ENCODE measurements at regions of chr12 and their contacts with region 1.

Region 1: GRCh38 chr12:74401035-74401434 is 136.6 kb upstream of the ATXN7L3B start:
- DNase-seq: no peak
- H3K4me3 Mint-ChIP-seq: no peak overlapping the region
- H3K27ac Mint-ChIP-seq: peak overlapping the region; percentile 70
- H3K4me1 Mint-ChIP-seq: peaks cover 27% of the 10 kb centered on the region
- H3K27me3 Mint-ChIP-seq: no peaks in the 10 kb centered on the region
- CTCF ChIP-seq: no peak

Region 2: DNA sequence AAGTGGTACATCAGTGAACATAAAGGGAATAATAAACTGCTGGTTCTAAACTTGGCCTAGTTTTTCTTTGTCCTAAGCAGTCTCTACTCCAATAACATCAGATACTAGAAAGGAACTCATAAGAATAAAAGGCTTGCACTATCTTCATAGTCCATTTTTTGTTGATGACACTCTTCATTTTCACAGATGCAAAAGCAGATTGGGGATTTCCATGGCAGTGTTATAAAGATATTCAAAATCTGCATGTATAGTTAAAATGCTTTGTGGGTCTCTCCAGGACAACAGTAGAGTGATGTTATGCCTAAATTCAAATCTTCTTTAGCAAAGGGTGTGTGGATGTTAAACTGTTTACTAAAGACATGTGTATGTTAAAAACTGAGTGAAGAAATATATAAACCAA is 1383.1 kb before region 1 on chr12:
- CTCF ChIA-PET with region 1: no interaction called
- intact Hi-C with region 1: no loop called
- DNase-seq: no peak
- H3K4me3 Mint-ChIP-seq: no peak overlapping the region
- H3K27ac Mint-ChIP-seq: no peak overlapping the region
- H3K4me1 Mint-ChIP-seq: no peaks in the 10 kb centered on the region
- H3K27me3 Mint-ChIP-seq: no peaks in the 10 kb centered on the region
- CTCF ChIP-seq: no peak

Region 3: DNA sequence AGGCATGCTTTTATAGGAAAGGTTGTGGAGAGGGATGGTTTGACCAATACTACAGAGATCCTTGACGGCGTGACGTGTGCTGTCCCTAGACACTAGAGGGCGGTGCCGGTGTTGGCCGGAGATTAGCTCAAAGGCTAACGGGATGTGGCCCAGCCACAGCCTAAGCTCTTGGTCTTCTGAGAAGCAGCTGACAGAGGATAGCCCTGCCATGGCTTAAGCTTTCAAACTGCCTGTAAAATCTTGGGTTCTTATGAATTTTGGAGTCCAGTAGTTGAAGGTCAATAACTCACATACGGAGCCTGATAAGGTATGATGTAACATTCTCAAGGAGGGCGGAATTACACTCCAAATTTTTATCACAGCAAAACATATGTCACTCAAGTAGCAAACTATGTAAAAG is 379.1 kb before region 1 on chr12:
- CTCF ChIA-PET with region 1: interaction called, 3 read pairs
- intact Hi-C with region 1: loop called (anchors 2 kb)
- DNase-seq: peak; percentile 85
- H3K4me3 Mint-ChIP-seq: no peak overlapping the region
- H3K27ac Mint-ChIP-seq: no peak overlapping the region
- H3K4me1 Mint-ChIP-seq: peaks cover 10% of the 10 kb centered on the region
- H3K27me3 Mint-ChIP-seq: no peaks in the 10 kb centered on the region
- CTCF ChIP-seq: peak; percentile 64

Region 4: GRCh38 chr12:74076918-74077317 is 324.1 kb before region 1 on chr12:
- CTCF ChIA-PET with region 1: no interaction called
- intact Hi-C with region 1: no loop called
- DNase-seq: no peak
- H3K4me3 Mint-ChIP-seq: no peak overlapping the region
- H3K27ac Mint-ChIP-seq: no peak overlapping the region
- H3K4me1 Mint-ChIP-seq: no peaks in the 10 kb centered on the region
- H3K27me3 Mint-ChIP-seq: no peaks in the 10 kb centered on the region
- CTCF ChIP-seq: no peak

Region 5: DNA sequence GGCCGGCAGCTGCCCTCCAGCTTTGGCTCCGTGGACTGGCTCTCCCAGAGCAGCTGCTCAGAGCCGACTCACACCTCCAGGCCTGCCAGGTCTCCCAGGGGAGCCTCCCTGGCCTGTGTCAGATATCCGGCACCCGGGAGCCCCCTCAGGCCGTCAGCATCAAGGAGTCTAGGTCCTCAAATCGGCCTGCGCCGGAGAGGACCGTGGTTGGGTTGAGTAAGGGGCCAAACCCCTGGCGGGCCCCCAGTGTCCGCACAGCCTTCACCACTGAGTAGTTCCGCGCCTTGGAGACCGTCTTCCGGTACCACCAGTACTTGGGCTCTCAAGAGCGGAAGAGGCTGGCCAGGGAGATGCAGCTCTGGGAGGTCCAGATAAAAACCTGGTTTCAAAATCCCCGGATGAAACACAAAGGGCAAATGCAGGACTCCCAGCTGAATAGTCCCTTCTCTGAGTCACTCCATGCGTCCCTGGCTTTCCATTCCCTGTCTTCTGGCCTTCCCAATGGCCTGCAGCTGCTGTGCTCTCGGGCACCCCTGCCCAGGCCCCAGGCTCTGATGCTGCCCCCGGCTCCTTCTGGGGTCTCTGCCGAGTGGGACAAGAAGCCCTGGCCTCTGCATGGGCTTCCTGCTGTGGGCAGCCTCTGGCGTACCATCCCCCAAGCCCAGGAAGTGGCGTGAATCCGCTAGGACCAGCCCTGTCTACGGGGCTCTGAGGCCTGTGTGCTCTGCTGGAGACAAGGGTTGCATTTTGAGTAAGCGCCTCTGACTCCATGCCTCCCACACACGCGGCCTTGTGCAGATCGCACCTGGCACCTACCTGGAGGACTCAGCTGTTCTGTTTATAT is 108.5 kb before region 1 on chr12:
- CTCF ChIA-PET with region 1: no interaction called
- intact Hi-C with region 1: no loop called
- DNase-seq: no peak
- H3K4me3 Mint-ChIP-seq: no peak overlapping the region
- H3K27ac Mint-ChIP-seq: no peak overlapping the region
- H3K4me1 Mint-ChIP-seq: no peaks in the 10 kb centered on the region
- H3K27me3 Mint-ChIP-seq: no peaks in the 10 kb centered on the region
- CTCF ChIP-seq: no peak

Region 6: DNA sequence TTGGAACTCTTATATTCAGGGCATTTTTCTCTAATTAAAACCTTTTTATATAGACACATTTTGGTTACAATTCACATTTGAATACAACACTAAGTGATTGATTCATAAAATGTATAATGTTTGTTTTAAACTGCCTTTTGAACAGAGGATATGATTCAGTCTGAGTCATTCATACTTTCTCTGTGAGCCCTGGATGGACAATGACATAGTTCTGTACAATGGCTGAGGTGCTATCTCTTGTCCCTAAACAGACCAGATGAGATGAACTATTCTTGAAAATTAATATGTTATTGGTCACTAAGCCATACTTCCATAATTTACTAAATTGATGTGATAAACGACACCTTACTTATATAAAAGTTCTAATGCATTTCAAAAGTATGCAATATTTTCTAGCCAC is 63.1 kb before region 1 on chr12:
- CTCF ChIA-PET with region 1: no interaction called
- intact Hi-C with region 1: loop called (anchors 2 kb)
- DNase-seq: peak; percentile 24
- H3K4me3 Mint-ChIP-seq: no peak overlapping the region
- H3K27ac Mint-ChIP-seq: peak overlapping the region; percentile 43
- H3K4me1 Mint-ChIP-seq: peaks cover 41% of the 10 kb centered on the region
- H3K27me3 Mint-ChIP-seq: no peaks in the 10 kb centered on the region
- CTCF ChIP-seq: no peak

Region 7: GRCh38 chr12:74602881-74603523 is 202.0 kb after region 1 on chr12:
- CTCF ChIA-PET with region 1: no interaction called
- intact Hi-C with region 1: loop called (anchors 5 kb)
- DNase-seq: peak; percentile 31
- H3K4me3 Mint-ChIP-seq: peak overlapping the region; percentile 52
- H3K27ac Mint-ChIP-seq: peak overlapping the region; percentile 100
- H3K4me1 Mint-ChIP-seq: peaks cover 50% of the 10 kb centered on the region
- H3K27me3 Mint-ChIP-seq: no peaks in the 10 kb centered on the region
- CTCF ChIP-seq: no peak

Region 8: DNA sequence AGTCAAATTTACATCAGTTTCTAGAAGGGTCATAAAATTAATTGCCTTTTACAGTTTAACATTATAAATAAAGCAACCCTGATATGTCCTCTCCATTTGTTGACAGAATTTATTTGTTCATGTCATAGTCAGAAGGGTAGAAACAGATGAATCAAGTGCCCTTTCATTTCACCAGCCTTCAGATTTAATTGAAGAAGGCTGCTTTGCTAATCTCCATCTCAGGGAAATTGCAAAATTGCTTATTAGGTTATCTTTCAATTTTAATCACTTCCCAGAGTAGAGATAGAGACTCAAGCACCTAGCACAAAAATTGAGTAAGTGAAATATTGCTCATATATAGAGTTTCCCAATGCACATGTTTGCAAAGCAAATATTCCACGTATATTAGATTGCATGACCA is 213.4 kb after region 1 on chr12:
- CTCF ChIA-PET with region 1: no interaction called
- intact Hi-C with region 1: no loop called
- DNase-seq: no peak
- H3K4me3 Mint-ChIP-seq: no peak overlapping the region
- H3K27ac Mint-ChIP-seq: no peak overlapping the region
- H3K4me1 Mint-ChIP-seq: no peaks in the 10 kb centered on the region
- H3K27me3 Mint-ChIP-seq: no peaks in the 10 kb centered on the region
- CTCF ChIP-seq: no peak

Measured in Calu3 (cell line).